ENCODE measurements at regions of chr3 and their contacts with region 1.

Region 1: DNA sequence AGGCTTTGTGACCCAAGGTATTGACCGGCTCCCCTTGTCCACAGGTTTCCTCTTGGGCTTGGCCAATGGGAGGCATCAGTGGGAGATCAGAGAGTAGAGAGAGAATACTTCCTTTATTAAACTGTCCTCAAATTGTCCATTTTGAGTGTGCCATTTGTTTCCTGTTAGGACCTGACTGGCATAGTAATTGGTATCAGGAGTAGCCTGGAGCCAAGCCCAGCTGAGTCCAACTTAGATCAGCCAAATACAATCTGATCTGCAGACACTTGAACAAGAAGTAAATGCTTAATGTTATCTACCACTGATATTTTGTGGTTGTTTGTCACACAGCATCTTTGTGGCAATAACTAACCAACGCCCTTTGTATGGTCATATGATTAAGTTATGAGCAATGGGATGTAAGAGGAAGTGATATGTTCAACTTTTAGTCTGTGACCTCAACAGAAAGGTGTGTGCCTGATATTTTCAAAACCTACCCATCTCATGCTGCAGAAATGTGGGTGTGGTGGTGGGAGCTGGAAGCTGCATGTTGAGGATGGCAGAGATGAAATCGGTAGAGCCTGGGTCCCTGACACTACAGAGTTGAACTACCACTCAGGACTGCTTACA is 13.3 kb downstream of the MYD88 start:
- DNase-seq: peak; percentile 25
- ATAC-seq: peak; percentile 44
- H3K4me3 ChIP-seq: no peak overlapping the region
- H3K4me3 Mint-ChIP-seq: no peak overlapping the region
- H3K27ac ChIP-seq: no peak overlapping the region
- H3K27ac Mint-ChIP-seq: peak overlapping the region; percentile 56
- H3K4me1 ChIP-seq: peaks cover 23 to 40% of the 10 kb centered on the region in 2 donors
- H3K4me1 Mint-ChIP-seq: peaks cover 50% of the 10 kb centered on the region
- H3K27me3 ChIP-seq: no peaks in the 10 kb centered on the region
- H3K27me3 Mint-ChIP-seq: no peaks in the 10 kb centered on the region
- CTCF ChIP-seq: no peak

Region 2: DNA sequence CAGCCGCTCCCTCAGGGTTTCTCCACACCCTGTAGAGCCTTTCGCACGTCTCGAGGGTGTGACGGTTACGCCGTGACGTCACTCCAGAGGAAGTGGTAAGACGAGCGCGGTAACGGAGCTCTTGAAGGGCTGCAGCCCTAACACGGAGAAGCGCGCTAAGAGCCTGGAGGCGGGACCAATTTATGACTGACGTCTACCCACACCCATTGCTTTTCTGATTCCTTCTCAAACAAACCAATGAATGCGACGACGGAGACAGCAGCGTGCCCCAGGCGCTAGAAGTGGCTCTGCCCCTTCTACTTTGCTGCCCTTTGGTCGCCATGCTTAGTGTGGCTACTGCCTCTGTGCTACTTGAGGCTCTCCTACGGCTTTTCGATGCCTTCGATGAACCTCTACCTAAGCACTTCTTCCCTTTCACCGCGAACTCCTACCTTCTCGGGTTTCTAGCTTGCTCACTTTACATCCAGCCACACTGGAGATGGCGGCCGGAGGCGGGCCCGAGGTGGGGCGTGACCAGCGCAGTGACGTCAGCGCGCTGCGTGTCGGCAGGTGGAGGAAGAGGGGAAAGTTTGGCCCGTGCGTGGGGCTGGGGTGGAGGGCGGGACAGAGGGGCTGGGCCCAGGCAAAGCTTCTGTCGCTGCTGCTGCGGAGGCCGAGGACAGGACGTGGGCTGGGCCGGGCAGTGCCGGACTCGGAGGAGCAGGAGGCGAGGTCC is 13.4 kb after region 1 on chr3 and contains the start of gene OXSR1:
- CTCF ChIA-PET with region 1: interaction called, 9 read pairs
- POLR2A ChIA-PET with region 1: interaction called, 5 read pairs
- intact Hi-C with region 1: loop called (anchors 1 kb)
- DNase-seq: peak; percentile 99
- ATAC-seq: peak; percentile 89
- H3K4me3 ChIP-seq: peak within 1 kb of the TSS; percentile 64 to 97 (median 85)
- H3K4me3 Mint-ChIP-seq: peak within 1 kb of the TSS; percentile 94
- H3K27ac ChIP-seq: peak within 1 kb of the TSS; percentile 98 to 100
- H3K27ac Mint-ChIP-seq: peak within 1 kb of the TSS; percentile 100
- H3K4me1 ChIP-seq: peaks cover 21 to 28% of the 10 kb centered on the region in 2 donors
- H3K4me1 Mint-ChIP-seq: peaks cover 50% of the 10 kb centered on the region
- H3K27me3 ChIP-seq: no peaks in the 10 kb centered on the region
- H3K27me3 Mint-ChIP-seq: no peaks in the 10 kb centered on the region
- CTCF ChIP-seq: no peak
- total RNA-seq, gene OXSR1: 37.9 and 41.5 TPM in 2 replicates